AG04450 (cell line): ENCODE measurements at regions of chr1 and their contacts with region 1.

Region 1: GRCh38 chr1:29033829-29034466 is 89.8 kb downstream of the TMEM200B start:
- DNase-seq: peak; percentile 8
- H3K4me3 ChIP-seq: no peak overlapping the region
- H3K27ac ChIP-seq: no peak overlapping the region
- H3K27me3 ChIP-seq: no peaks in the 10 kb centered on the region
- CTCF ChIP-seq: peak; percentile 67

Region 2: GRCh38 chr1:28783363-28783762 is 250.6 kb before region 1 on chr1:
- CTCF ChIA-PET with region 1: interaction called, 26 read pairs
- POLR2A ChIA-PET with region 1: no interaction called
- DNase-seq: no peak
- H3K4me3 ChIP-seq: no peak overlapping the region
- H3K27ac ChIP-seq: no peak overlapping the region
- H3K27me3 ChIP-seq: no peaks in the 10 kb centered on the region
- CTCF ChIP-seq: no peak

Region 3: DNA sequence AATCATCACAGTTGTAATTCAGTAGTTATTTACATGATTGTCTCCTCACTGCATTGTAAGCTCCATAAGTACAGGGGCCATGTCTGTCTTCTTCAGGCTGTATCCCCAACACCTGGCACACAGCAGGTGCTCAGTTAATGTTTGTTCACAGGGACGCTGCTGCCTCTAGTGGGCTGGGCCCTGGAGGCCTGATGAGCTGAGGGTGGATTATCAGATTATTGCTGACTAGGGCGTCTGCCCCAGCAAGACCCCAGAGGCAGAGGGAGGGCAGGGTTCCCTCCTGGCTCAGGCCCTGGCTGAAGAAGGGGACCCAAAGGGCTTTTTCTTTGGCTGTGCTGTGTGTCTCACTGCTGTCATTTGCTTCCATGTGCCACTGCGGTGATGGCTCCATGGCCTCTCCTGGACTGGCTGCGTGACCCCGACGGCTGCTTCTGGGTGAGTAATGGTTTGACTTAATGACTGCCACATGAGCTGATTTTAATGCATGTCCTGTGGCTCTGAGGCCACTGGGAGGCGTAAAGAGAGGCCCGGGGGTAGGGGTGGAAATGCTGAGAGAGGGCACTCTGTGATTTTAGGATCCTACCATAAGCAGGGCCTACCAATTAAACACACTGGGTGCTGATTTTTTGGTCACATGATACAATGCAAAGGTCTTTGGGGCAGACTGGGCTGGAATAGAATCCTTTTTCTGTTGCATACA is 140.4 kb before region 1 on chr1:
- CTCF ChIA-PET with region 1: interaction called, 53 read pairs
- POLR2A ChIA-PET with region 1: no interaction called
- DNase-seq: no peak
- H3K4me3 ChIP-seq: no peak overlapping the region
- H3K27ac ChIP-seq: no peak overlapping the region
- H3K27me3 ChIP-seq: peaks cover 7% of the 10 kb centered on the region
- CTCF ChIP-seq: peak; percentile 45

Region 4: DNA sequence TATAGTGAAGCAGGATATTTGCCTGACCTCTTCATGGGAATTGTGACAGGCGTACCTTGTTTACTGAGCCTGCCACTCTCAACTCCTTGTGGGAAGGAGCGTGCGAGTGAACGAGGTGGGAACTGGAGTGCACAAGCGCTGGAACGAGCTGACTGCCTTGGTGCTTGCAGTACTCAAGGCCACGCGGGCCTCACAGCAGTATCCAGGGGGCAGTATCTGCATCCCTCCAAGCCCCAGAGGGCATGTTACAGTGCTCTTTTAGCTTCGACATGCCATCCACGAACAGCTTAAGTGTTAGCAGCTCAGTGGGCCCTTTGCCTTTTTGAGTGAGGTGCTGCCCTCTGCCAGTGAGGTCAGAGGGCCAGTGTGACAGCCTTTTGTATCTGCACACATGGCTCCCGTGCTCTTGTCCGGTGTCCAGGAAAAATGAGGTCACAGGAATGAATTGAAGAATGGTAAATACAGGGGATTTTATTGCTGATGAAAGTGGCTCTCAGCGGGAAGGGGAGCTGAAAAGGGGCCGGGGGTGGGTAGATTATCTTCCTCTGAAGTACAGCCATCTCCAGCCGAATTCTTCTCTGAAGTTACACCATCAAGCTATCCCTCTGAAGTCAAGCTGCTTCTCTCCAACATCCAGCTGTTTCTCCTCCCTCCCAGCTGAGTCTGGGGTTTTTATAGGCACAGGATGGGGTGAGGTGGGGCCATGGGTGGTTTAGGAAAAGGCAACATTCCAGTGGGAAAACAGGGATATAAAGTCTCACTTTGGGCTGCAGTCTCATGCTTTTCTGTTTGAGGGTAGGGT is 50.2 kb before region 1 on chr1:
- CTCF ChIA-PET with region 1: no interaction called
- POLR2A ChIA-PET with region 1: no interaction called
- DNase-seq: no peak
- H3K4me3 ChIP-seq: no peak overlapping the region
- H3K27ac ChIP-seq: no peak overlapping the region
- H3K27me3 ChIP-seq: no peaks in the 10 kb centered on the region
- CTCF ChIP-seq: no peak

Region 5: GRCh38 chr1:29050166-29050565 is 16.2 kb after region 1 on chr1:
- CTCF ChIA-PET with region 1: interaction called, 27 read pairs
- POLR2A ChIA-PET with region 1: no interaction called
- DNase-seq: no peak
- H3K4me3 ChIP-seq: no peak overlapping the region
- H3K27ac ChIP-seq: no peak overlapping the region
- H3K27me3 ChIP-seq: no peaks in the 10 kb centered on the region
- CTCF ChIP-seq: no peak

Region 6: DNA sequence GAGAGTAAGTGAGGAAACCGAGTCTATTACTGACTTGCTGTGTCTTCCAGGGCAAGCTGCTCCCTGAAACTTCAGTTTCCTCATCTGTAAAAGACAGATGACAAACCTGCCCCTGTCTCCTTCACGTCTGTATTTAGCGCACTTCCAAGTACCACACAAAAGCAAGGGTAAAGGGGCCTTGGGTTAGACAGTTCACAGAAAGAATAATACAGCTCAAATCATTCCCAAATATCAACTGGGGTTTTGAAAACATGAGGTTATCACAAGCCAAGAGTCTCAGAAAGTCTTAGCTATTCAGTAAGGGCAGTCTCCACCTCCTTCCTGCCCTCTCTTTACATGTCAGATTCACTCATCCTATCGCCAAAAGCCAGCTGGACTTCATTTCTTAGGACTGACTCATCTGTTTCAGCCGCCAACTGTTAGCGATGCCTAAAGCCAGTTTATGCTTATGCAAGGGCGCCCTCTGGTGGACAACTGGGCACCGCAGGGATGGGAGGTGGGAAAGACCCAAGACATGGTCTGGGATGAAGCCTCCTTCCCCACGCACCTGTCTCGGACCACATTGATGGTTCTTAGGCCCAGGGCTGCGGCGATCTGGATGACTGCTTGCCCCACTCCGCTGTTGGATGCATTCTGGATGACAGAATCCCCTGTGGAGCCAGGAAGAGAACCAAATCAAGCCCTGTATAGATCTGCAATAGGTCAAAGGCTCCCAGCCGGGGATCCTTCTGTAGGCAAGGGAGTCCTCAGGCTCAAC is 168.8 kb after region 1 on chr1:
- CTCF ChIA-PET with region 1: interaction called, 65 read pairs
- POLR2A ChIA-PET with region 1: no interaction called
- DNase-seq: peak; percentile 98
- H3K4me3 ChIP-seq: no peak overlapping the region
- H3K27ac ChIP-seq: peak overlapping the region; percentile 92
- H3K27me3 ChIP-seq: no peaks in the 10 kb centered on the region
- CTCF ChIP-seq: peak; percentile 95